PC-3 (cell line): ENCODE measurements at regions of chr13 and their contacts with region 1.

Region 1: GRCh38 chr13:55517312-55517711 is 1623.4 kb upstream of the PRR20A start:
- DNase-seq: no peak
- ATAC-seq: no peak
- H3K4me3 ChIP-seq: no peak overlapping the region
- H3K27ac ChIP-seq: no peak overlapping the region
- H3K4me1 ChIP-seq: no peaks in the 10 kb centered on the region
- H3K27me3 ChIP-seq: no peaks in the 10 kb centered on the region
- CTCF ChIP-seq: peak; percentile 41; the same call in 1 of the 2 replicates

Region 2: GRCh38 chr13:55199134-55199533 is 318.2 kb before region 1 on chr13:
- CTCF ChIA-PET with region 1: no interaction called
- POLR2A ChIA-PET with region 1: no interaction called
- intact Hi-C with region 1: loop called (anchors 10 kb)
- DNase-seq: peak; percentile 4
- ATAC-seq: peak; percentile 57
- H3K4me3 ChIP-seq: no peak overlapping the region
- H3K27ac ChIP-seq: no peak overlapping the region
- H3K4me1 ChIP-seq: no peaks in the 10 kb centered on the region
- H3K27me3 ChIP-seq: no peaks in the 10 kb centered on the region
- CTCF ChIP-seq: peak; percentile 32; the same call in 1 of the 2 replicates

Region 3: DNA sequence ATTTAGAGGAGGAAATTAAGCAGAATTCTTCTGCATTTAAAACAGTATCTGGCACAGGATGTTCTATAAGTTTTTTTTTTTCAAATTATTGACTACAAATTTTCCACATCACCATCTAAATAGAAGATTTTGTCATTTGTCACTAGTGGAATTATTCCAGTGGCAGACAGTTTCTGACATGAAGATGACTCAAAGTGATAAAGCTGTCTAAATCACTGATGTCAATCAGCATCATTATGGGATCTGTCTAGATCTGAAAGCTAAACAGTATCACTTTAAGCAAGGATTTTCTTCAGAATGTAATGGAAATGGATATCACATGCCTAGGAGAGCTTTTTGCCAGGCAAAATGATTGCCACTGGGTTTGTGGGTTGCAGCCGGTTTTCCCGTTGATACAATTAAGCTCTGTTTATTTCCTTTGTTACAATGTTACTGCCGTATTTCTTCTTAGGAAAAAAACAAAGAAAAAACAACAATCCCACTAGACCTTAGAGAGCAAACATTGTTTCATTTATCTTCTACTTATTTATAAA is 33.6 kb before region 1 on chr13:
- CTCF ChIA-PET with region 1: no interaction called
- POLR2A ChIA-PET with region 1: no interaction called
- intact Hi-C with region 1: no loop called
- DNase-seq: no peak
- ATAC-seq: no peak
- H3K4me3 ChIP-seq: no peak overlapping the region
- H3K27ac ChIP-seq: no peak overlapping the region
- H3K4me1 ChIP-seq: no peaks in the 10 kb centered on the region
- H3K27me3 ChIP-seq: no peaks in the 10 kb centered on the region
- CTCF ChIP-seq: no peak